Activated CD4-positive, alpha-beta T cell treated with anti-CD3 and anti-CD28 coated beads for 36 hours (primary cell): ENCODE measurements at regions of chr22 and their contacts with region 1.

Region 1: DNA sequence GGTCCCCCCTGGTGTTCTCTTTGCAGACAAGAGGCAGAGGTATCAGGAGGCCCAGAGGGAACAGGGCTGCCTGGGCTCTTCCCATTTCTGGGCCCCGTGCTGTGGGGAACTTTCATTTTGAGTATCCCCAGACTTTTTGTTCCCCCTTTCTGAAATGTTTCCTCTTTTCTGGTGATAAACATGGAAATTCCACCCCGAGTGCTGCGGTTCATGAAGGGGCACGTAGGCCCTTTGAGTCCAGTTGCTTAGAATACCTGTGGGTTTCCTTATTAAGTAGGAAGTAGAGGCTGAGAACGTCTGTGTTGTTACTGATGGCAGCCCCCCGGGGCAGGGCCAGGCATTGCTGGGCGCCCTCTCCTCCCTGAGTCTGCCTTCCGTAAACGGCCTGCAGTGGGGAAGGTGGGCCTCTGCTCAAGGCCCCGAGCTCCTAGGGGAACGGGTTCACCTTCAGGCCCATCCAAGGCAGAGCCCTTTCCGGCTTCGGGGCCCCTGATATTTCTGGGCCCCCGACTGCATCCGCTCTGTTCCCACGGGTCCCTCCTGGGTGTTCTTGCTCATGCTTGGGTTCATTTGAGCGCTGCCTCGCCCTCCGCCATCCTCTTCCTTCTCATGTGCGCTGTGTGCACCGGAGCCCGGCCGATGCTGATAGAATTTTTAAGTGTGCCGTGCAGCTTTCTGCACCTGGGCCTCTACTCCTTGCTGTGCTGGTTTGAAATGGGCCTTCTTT is 12.0 kb downstream of the TBC1D22A start:
- DNase-seq: peak; percentile 62
- ATAC-seq: peak; percentile 17
- H3K4me3 Mint-ChIP-seq: peak overlapping the region; percentile 67
- H3K27ac Mint-ChIP-seq: peak overlapping the region; percentile 78
- H3K4me1 Mint-ChIP-seq: peaks cover 74% of the 10 kb centered on the region
- H3K27me3 Mint-ChIP-seq: no peaks in the 10 kb centered on the region

Region 2: GRCh38 chr22:46791201-46791731 is 16.9 kb after region 1 on chr22:
- CTCF ChIA-PET with region 1: interaction called, 5 read pairs
- POLR2A ChIA-PET with region 1: interaction called, 3 read pairs
- intact Hi-C with region 1: loop called (anchors 1 kb)
- DNase-seq: peak; percentile 88
- ATAC-seq: peak; percentile 93
- H3K4me3 Mint-ChIP-seq: peak overlapping the region; percentile 73
- H3K27ac Mint-ChIP-seq: peak overlapping the region; percentile 96
- H3K4me1 Mint-ChIP-seq: peaks cover 51% of the 10 kb centered on the region
- H3K27me3 Mint-ChIP-seq: no peaks in the 10 kb centered on the region

Region 3: GRCh38 chr22:46890819-46891218 is 116.4 kb after region 1 on chr22:
- CTCF ChIA-PET with region 1: no interaction called
- POLR2A ChIA-PET with region 1: no interaction called
- intact Hi-C with region 1: no loop called
- DNase-seq: no peak
- ATAC-seq: no peak
- H3K4me3 Mint-ChIP-seq: no peak overlapping the region
- H3K27ac Mint-ChIP-seq: no peak overlapping the region
- H3K4me1 Mint-ChIP-seq: no peaks in the 10 kb centered on the region
- H3K27me3 Mint-ChIP-seq: no peaks in the 10 kb centered on the region